ENCODE measurements at regions of chrX and their contacts with region 1.

Region 1: GRCh38 chrX:4805502-4805901 is 1092.1 kb upstream of the PRKX start:
- DNase-seq: no peak
- ATAC-seq: no peak
- H3K4me3 Mint-ChIP-seq: no peak overlapping the region
- H3K27ac Mint-ChIP-seq: no peak overlapping the region
- H3K4me1 Mint-ChIP-seq: no peaks in the 10 kb centered on the region
- H3K27me3 Mint-ChIP-seq: no peaks in the 10 kb centered on the region
- CTCF ChIP-seq: no peak

Region 2: DNA sequence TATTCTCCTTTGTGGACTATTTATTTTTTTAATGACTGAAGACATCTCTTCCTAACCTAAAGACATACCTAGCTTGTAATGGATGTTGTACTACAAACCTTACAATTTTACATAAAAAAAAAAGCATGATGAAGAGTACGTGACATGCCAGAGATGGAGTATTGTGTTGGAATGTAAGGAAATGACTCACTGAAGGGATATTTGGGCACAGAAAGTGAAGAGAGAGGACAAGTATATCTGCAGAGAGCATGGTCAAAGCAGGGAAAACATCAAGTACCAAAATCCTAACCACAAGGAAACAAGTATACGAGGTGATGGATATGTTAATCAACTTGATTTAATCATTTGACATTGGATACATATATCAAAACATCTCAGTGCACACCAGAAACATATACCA is 40.6 kb before region 1 on chrX:
- CTCF ChIA-PET with region 1: no interaction called
- POLR2A ChIA-PET with region 1: no interaction called
- intact Hi-C with region 1: no loop called
- DNase-seq: no peak
- ATAC-seq: no peak
- H3K4me3 Mint-ChIP-seq: no peak overlapping the region
- H3K27ac Mint-ChIP-seq: no peak overlapping the region
- H3K4me1 Mint-ChIP-seq: no peaks in the 10 kb centered on the region
- H3K27me3 Mint-ChIP-seq: no peaks in the 10 kb centered on the region
- CTCF ChIP-seq: no peak

Region 3: GRCh38 chrX:4787987-4788386 is 17.5 kb before region 1 on chrX:
- CTCF ChIA-PET with region 1: no interaction called
- POLR2A ChIA-PET with region 1: no interaction called
- intact Hi-C with region 1: no loop called
- DNase-seq: no peak
- ATAC-seq: no peak
- H3K4me3 Mint-ChIP-seq: no peak overlapping the region
- H3K27ac Mint-ChIP-seq: no peak overlapping the region
- H3K4me1 Mint-ChIP-seq: no peaks in the 10 kb centered on the region
- H3K27me3 Mint-ChIP-seq: no peaks in the 10 kb centered on the region
- CTCF ChIP-seq: no peak

Region 4: DNA sequence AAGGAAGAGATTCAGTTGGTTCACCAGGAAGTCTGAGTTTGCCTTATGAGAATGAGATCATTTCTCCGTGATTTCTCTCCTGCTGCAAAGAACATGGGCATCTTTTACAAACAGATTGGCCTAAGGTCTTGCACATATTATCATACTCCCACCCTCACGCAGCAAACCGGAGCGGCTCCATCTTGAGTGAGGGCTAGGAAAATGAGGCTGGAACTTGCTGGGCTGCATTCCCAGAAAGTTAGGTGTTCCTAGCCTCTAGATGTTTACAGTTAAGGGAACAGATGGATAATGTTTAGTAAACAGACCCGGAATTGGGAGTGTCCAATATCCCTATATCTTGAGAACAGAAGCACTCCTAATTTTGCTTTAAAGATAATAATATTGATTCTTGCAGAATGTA is 1977.3 kb after region 1 on chrX:
- CTCF ChIA-PET with region 1: no interaction called
- POLR2A ChIA-PET with region 1: no interaction called
- intact Hi-C with region 1: loop called (anchors 10 kb)
- DNase-seq: no peak
- ATAC-seq: no peak
- H3K4me3 Mint-ChIP-seq: no peak overlapping the region
- H3K27ac Mint-ChIP-seq: no peak overlapping the region
- H3K4me1 Mint-ChIP-seq: no peaks in the 10 kb centered on the region
- H3K27me3 Mint-ChIP-seq: no peaks in the 10 kb centered on the region
- CTCF ChIP-seq: no peak